Mammary epithelial cell (primary cell): ENCODE measurements at regions of chr3 and their contacts with region 1.

Region 1: GRCh38 chr3:120795017-120795648 is 52.6 kb downstream of the GTF2E1 start:
- DNase-seq: peak; percentile 50
- H3K4me3 ChIP-seq: no peak overlapping the region
- H3K27ac ChIP-seq: no peak overlapping the region
- H3K4me1 ChIP-seq: peaks cover 5% of the 10 kb centered on the region
- H3K27me3 ChIP-seq: peaks cover 4% of the 10 kb centered on the region
- CTCF ChIP-seq: peak; percentile 87

Region 2: DNA sequence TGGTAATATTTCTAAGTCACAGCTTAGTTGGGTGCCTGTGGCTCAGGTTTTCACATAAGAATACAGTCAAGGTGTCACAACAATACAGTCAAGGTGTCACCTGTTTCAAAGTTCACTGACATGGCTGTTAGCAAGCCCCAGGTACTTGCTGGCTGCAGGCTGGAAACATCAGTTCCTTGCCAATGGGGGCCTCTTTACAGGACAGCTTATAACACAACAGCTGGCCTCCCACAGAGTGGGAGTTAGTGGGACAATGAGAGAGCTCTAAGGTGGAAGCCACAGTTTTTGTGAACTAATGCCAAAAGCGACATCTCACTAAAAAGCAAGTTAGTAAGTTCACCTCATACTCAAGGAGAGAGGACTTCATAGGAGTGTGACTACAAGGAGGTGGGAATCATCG is 555.5 kb before region 1 on chr3:
- CTCF ChIA-PET with region 1: interaction called, 5 read pairs
- dilution Hi-C with region 1: no loop called
- in situ Hi-C with region 1: no loop called
- intact Hi-C with region 1: loop called (anchors 5 kb)
- DNase-seq: no peak
- H3K4me3 ChIP-seq: no peak overlapping the region
- H3K27ac ChIP-seq: no peak overlapping the region
- H3K4me1 ChIP-seq: no peaks in the 10 kb centered on the region
- H3K27me3 ChIP-seq: no peaks in the 10 kb centered on the region
- CTCF ChIP-seq: no peak

Region 3: GRCh38 chr3:120274739-120275167 is 520.4 kb before region 1 on chr3:
- CTCF ChIA-PET with region 1: no interaction called
- dilution Hi-C with region 1: no loop called
- in situ Hi-C with region 1: loop called (anchors 25 kb)
- intact Hi-C with region 1: no loop called
- DNase-seq: no peak
- H3K4me3 ChIP-seq: no peak overlapping the region
- H3K27ac ChIP-seq: no peak overlapping the region
- H3K4me1 ChIP-seq: no peaks in the 10 kb centered on the region
- H3K27me3 ChIP-seq: peaks cover 4% of the 10 kb centered on the region
- CTCF ChIP-seq: no peak

Region 4: GRCh38 chr3:120622870-120623731 is 172.0 kb before region 1 on chr3:
- CTCF ChIA-PET with region 1: no interaction called
- dilution Hi-C with region 1: no loop called
- in situ Hi-C with region 1: no loop called
- intact Hi-C with region 1: loop called (anchors 1 kb)
- DNase-seq: peak; percentile 71
- H3K4me3 ChIP-seq: no peak overlapping the region
- H3K27ac ChIP-seq: no peak overlapping the region
- H3K4me1 ChIP-seq: no peaks in the 10 kb centered on the region
- H3K27me3 ChIP-seq: no peaks in the 10 kb centered on the region
- CTCF ChIP-seq: peak in 1 of 2 donors; percentile 34

Region 5: GRCh38 chr3:120855665-120856437 is 60.7 kb after region 1 on chr3:
- CTCF ChIA-PET with region 1: no interaction called
- dilution Hi-C with region 1: no loop called
- in situ Hi-C with region 1: no loop called
- intact Hi-C with region 1: no loop called
- DNase-seq: peak; percentile 37
- H3K4me3 ChIP-seq: no peak overlapping the region
- H3K27ac ChIP-seq: no peak overlapping the region
- H3K4me1 ChIP-seq: no peaks in the 10 kb centered on the region
- H3K27me3 ChIP-seq: peaks cover 2% of the 10 kb centered on the region
- CTCF ChIP-seq: no peak